Breast epithelium (tissue), 4 donors: ENCODE measurements at regions of chr12 and their contacts with region 1.

Region 1: DNA sequence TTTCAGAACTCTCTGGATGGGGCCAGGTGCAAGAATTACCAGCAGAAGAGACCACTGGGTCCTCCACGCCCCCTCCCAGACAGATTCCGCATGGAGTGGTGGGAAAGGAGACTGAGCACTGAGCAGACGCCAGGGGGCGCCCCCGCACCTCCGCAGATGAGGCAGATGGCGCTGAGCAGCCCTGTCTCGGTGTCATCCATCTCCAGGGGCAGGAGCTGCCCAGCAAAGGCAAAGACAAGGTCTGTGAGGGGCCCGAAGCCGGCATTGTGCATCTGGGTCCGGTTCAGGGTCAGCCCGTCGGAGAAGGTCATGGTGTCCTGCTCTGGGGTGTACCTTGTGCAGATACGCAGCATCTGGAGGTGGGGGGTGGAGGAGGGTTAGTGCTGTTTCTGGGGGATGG is 6.3 kb upstream of the ITGB7 start:
- DNase-seq: peak; percentile 66 to 80
- H3K4me3 ChIP-seq: no peak overlapping the region
- H3K27ac ChIP-seq: peak overlapping the region; percentile 29 to 52
- H3K4me1 ChIP-seq: peaks cover 16 to 27% of the 10 kb centered on the region in 2 donors
- H3K27me3 ChIP-seq: no peaks in the 10 kb centered on the region
- CTCF ChIP-seq: peak; percentile 77 to 95 (median 89)
- POLR2A ChIP-seq: no peak

Region 2: GRCh38 chr12:52821826-52822660 is 391.3 kb before region 1 on chr12:
- intact Hi-C with region 1: no loop called
- DNase-seq: no peak
- H3K4me3 ChIP-seq: no peak overlapping the region
- H3K27ac ChIP-seq: no peak overlapping the region
- H3K4me1 ChIP-seq: no peaks in the 10 kb centered on the region
- H3K27me3 ChIP-seq: peaks cover 0 to 4% of the 10 kb centered on the region in 2 donors
- CTCF ChIP-seq: no peak
- POLR2A ChIP-seq: no peak

Region 3: DNA sequence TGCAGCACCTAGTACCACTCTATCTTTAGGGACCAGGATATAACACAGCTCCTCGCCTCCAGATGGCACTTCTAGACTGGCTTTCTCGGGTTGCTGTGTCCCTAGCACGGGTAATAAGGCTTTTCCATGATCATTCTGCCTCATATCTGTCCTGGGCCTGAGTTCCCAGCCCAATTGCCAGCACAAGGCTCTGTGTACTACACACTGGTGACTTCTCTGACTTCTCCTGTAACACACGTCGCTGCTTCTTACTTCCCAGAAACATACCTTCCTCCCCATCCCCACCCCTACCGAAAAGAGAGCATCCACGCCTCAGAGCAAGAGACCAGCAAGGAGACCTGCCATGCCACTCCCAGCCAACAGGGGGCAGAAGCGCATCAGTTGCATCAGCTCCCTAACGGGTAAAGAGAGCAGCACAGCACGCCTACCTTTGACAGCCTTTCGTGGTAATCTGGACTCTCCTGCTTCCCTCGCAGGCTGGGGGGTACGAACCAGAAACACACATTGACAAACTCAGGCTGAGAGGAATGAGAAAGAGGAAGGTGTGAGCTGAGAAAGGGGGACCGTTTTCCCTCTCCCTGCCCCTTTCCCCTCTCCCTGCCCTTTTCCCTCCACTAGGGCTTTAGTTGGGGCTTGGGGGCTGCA is 54.0 kb before region 1 on chr12:
- intact Hi-C with region 1: loop called (anchors 5 kb)
- DNase-seq: peak; percentile 75 to 88
- H3K4me3 ChIP-seq: no peak overlapping the region
- H3K27ac ChIP-seq: peak overlapping the region in 1 of 2 donors; percentile 6
- H3K4me1 ChIP-seq: no peaks in the 10 kb centered on the region
- H3K27me3 ChIP-seq: no peaks in the 10 kb centered on the region
- CTCF ChIP-seq: peak; percentile 96 to 99 (median 98)
- POLR2A ChIP-seq: no peak

Region 4: GRCh38 chr12:53287741-53288216 is 74.4 kb after region 1 on chr12:
- intact Hi-C with region 1: loop called (anchors 2 kb)
- DNase-seq: peak; percentile 54 to 68
- H3K4me3 ChIP-seq: no peak overlapping the region
- H3K27ac ChIP-seq: peak overlapping the region; percentile 69 to 84
- H3K4me1 ChIP-seq: no peaks in the 10 kb centered on the region
- H3K27me3 ChIP-seq: no peaks in the 10 kb centered on the region
- CTCF ChIP-seq: peak; percentile 51 to 88 (median 70)
- POLR2A ChIP-seq: no peak